CD8-positive, alpha-beta T cell (primary cell): ENCODE measurements at regions of chr14 and their contacts with region 1.

Region 1: GRCh38 chr14:70622111-70622712 is 19.5 kb upstream of the TTC9 start:
- DNase-seq: peak in 8 of 9 experiments; percentile 31 to 73 (median 62)
- ATAC-seq: peak; percentile 96
- H3K4me3 ChIP-seq: no peak overlapping the region
- H3K4me3 Mint-ChIP-seq: no peak overlapping the region
- H3K27ac ChIP-seq: no peak overlapping the region
- H3K27ac Mint-ChIP-seq: no peak overlapping the region
- H3K4me1 ChIP-seq: no peaks in the 10 kb centered on the region
- H3K4me1 Mint-ChIP-seq: peaks cover 3% of the 10 kb centered on the region
- H3K27me3 ChIP-seq: peaks cover 0 to 2% of the 10 kb centered on the region in 2 experiments
- H3K27me3 Mint-ChIP-seq: no peaks in the 10 kb centered on the region
- CTCF ChIP-seq: peak; percentile 93

Region 2: DNA sequence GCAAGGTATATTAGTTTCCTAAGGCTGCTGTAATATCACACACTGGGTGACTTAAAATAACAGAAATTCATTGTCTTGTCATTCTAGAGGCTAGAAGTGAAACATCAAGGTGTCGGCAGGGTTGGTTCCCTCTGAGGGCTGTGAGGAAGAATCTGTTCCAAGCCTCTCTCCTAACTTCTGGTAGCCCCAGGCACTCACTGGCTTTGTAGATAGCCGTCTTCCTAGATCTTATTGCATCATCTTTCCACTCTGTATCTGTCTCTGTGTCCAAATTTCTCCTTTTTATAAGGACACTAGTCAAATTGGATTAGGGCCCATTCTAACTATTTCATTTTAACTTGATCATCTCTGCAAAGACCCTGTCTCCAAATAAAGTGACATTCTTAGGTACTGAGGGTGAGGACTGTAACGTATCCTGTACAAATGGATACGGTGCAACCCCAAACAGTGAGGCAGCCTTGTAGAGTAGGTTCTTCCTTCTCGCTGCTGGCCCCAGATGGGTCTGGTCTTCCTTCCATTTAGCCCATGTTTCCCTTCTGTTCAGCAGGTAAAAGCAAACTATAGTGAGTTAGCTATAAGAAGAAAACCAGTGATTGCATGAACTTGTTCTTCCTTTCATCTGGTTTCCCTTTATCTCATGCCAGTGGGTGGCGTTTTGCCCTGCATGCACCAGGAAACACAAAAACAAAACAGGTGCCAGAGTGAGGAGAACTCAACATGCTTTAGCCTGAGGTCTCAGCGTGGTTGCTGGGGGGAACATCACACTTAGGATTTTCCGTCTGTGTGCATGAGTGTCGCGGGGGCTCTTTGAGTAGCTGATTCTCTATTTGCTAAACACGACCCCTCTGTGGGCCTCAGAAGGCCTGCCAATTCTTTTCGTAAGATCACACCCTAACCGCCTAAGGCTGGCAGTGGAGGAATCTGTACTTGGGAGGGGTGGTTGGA is 39.0 kb after region 1 on chr14:
- CTCF ChIA-PET with region 1: interaction called, 15 read pairs
- POLR2A ChIA-PET with region 1: no interaction called
- intact Hi-C with region 1: loop called in 1 of 2 experiments (anchors 2 kb)
- DNase-seq: peak; percentile 25 to 84 (median 65)
- ATAC-seq: peak; percentile 76
- H3K4me3 ChIP-seq: peak overlapping the region in 1 of 2 experiments; percentile 18
- H3K4me3 Mint-ChIP-seq: peak overlapping the region; percentile 78
- H3K27ac ChIP-seq: peak overlapping the region; percentile 44 to 50
- H3K27ac Mint-ChIP-seq: peak overlapping the region; percentile 89
- H3K4me1 ChIP-seq: peaks cover 87% of the 10 kb centered on the region
- H3K4me1 Mint-ChIP-seq: peaks cover 92% of the 10 kb centered on the region
- H3K27me3 ChIP-seq: no peaks in the 10 kb centered on the region
- H3K27me3 Mint-ChIP-seq: no peaks in the 10 kb centered on the region
- CTCF ChIP-seq: no peak

Region 3: GRCh38 chr14:70707138-70708038 is 85.2 kb after region 1 on chr14:
- CTCF ChIA-PET with region 1: interaction called, 135 read pairs
- POLR2A ChIA-PET with region 1: interaction called, 4 read pairs
- intact Hi-C with region 1: no loop called
- DNase-seq: no peak
- ATAC-seq: no peak
- H3K4me3 ChIP-seq: no peak overlapping the region
- H3K4me3 Mint-ChIP-seq: no peak overlapping the region
- H3K27ac ChIP-seq: no peak overlapping the region
- H3K27ac Mint-ChIP-seq: no peak overlapping the region
- H3K4me1 ChIP-seq: no peaks in the 10 kb centered on the region
- H3K4me1 Mint-ChIP-seq: no peaks in the 10 kb centered on the region
- H3K27me3 ChIP-seq: no peaks in the 10 kb centered on the region
- H3K27me3 Mint-ChIP-seq: no peaks in the 10 kb centered on the region
- CTCF ChIP-seq: no peak

Region 4: GRCh38 chr14:70821584-70822529 is 199.6 kb after region 1 on chr14:
- CTCF ChIA-PET with region 1: interaction called, 35 read pairs
- POLR2A ChIA-PET with region 1: no interaction called
- intact Hi-C with region 1: loop called (anchors 1 kb)
- DNase-seq: peak in 8 of 9 experiments; percentile 35 to 73 (median 58)
- ATAC-seq: peak; percentile 39
- H3K4me3 ChIP-seq: peak overlapping the region; percentile 57 to 67
- H3K4me3 Mint-ChIP-seq: peak overlapping the region; percentile 76
- H3K27ac ChIP-seq: peak overlapping the region in 1 of 2 experiments; percentile 15
- H3K27ac Mint-ChIP-seq: no peak overlapping the region
- H3K4me1 ChIP-seq: peaks cover 17% of the 10 kb centered on the region
- H3K4me1 Mint-ChIP-seq: peaks cover 16% of the 10 kb centered on the region
- H3K27me3 ChIP-seq: no peaks in the 10 kb centered on the region
- H3K27me3 Mint-ChIP-seq: peaks cover 7% of the 10 kb centered on the region
- CTCF ChIP-seq: no peak

Region 5: GRCh38 chr14:70842851-70843462 is 220.7 kb after region 1 on chr14:
- CTCF ChIA-PET with region 1: no interaction called
- POLR2A ChIA-PET with region 1: no interaction called
- intact Hi-C with region 1: no loop called
- DNase-seq: no peak
- ATAC-seq: no peak
- H3K4me3 ChIP-seq: no peak overlapping the region
- H3K4me3 Mint-ChIP-seq: no peak overlapping the region
- H3K27ac ChIP-seq: no peak overlapping the region
- H3K27ac Mint-ChIP-seq: no peak overlapping the region
- H3K4me1 ChIP-seq: no peaks in the 10 kb centered on the region
- H3K4me1 Mint-ChIP-seq: no peaks in the 10 kb centered on the region
- H3K27me3 ChIP-seq: no peaks in the 10 kb centered on the region
- H3K27me3 Mint-ChIP-seq: peaks cover 2% of the 10 kb centered on the region
- CTCF ChIP-seq: no peak

Region 6: DNA sequence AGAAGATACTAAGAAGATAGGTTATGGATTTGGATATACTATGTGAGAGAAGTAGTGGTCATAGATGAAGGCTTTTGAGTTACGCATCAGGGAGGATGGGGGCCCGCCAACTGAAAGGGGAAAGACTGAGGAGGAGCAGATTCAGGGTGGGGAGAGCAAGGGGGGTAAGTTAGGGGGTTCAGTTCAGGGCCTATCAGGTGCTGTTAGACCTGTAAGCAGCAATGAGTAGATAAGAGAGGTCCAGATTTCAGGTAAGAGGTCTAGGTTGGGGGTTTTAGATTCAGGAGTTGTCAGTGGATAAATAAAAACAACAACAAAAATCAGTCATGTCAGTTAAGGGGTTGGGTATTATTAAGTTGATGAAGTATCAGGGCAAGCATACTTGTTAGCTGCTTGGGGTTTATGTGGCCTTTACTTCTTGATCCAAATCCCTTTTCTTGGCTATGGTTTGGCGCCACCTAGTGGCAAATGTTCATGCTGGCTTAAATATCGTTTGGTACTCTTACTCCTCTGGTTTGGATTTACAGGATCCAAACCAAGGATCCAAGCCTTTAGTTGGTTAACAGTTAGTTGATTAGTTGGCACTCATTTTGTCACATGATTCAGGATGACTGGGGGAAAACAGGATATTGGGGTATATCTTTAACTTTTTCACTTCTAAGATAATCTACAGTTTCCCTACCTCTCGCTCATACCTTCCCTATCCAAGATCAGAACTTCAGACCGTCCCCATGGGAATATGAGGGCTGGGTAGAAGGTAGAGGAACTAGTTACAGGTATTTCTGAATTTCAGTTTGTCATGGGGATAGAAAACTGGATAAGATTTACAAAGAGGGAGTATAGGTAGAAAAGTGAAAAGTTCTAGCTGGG is 350.1 kb after region 1 on chr14:
- CTCF ChIA-PET with region 1: no interaction called
- POLR2A ChIA-PET with region 1: no interaction called
- intact Hi-C with region 1: loop called (anchors 1 to 5 kb)
- DNase-seq: peak; percentile 65 to 90 (median 85)
- ATAC-seq: peak; percentile 81
- H3K4me3 ChIP-seq: no peak overlapping the region
- H3K4me3 Mint-ChIP-seq: no peak overlapping the region
- H3K27ac ChIP-seq: peak overlapping the region in 1 of 2 experiments; percentile 0
- H3K27ac Mint-ChIP-seq: peak overlapping the region; percentile 53
- H3K4me1 ChIP-seq: peaks cover 25% of the 10 kb centered on the region
- H3K4me1 Mint-ChIP-seq: peaks cover 48% of the 10 kb centered on the region
- H3K27me3 ChIP-seq: no peaks in the 10 kb centered on the region
- H3K27me3 Mint-ChIP-seq: no peaks in the 10 kb centered on the region
- CTCF ChIP-seq: peak; percentile 81

Region 7: GRCh38 chr14:71523630-71524319 is 901.6 kb after region 1 on chr14:
- CTCF ChIA-PET with region 1: no interaction called
- POLR2A ChIA-PET with region 1: no interaction called
- intact Hi-C with region 1: no loop called
- DNase-seq: no peak
- ATAC-seq: no peak
- H3K4me3 ChIP-seq: no peak overlapping the region
- H3K4me3 Mint-ChIP-seq: no peak overlapping the region
- H3K27ac ChIP-seq: no peak overlapping the region
- H3K27ac Mint-ChIP-seq: peak overlapping the region; percentile 34
- H3K4me1 ChIP-seq: no peaks in the 10 kb centered on the region
- H3K4me1 Mint-ChIP-seq: peaks cover 10% of the 10 kb centered on the region
- H3K27me3 ChIP-seq: no peaks in the 10 kb centered on the region
- H3K27me3 Mint-ChIP-seq: no peaks in the 10 kb centered on the region
- CTCF ChIP-seq: no peak